IMR-90 (cell line): ENCODE measurements at regions of chr4 and their contacts with region 1.

Region 1: DNA sequence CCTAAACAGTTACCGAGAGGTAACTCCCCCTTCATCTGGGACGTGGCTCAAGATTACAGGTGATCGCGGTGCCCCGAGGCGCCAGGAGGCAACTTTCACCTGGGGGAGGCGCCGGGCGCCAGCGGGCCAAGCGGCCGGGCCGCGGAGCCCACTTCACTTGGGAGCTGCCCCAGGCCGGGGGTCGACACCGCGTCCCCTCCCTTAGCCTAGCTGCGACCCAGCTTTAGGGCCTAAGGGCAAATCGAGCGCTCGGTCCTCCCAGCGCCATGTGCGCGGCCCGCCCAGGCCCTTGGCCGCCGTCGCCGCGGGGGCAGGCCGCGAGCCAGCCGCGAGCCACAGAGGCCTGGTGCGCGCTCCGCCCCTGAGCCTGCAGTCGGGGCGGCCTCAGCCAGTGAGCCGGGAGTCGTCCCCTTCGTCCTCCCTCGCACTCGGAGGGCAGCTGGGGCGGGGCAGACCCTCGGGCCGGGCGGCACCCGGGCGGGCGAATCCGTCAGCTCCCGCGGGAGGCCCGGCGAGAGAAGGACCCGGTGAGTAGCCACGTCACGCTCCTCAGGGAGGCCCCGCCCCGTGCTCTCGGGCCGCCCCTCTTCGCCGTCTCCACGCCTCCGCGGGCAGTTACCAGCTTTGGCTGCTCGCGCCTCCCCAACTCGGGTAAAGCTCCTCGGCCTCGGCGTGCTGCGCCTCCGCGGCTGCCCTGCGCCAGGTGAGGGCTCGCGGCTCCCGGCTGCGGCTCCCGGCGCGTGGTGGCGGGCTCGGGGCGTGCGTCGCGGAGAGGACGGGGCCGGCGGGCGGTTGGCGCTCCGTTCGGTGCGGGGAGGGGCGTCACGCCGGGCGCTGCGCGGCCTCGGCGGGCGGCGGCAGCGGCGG is at the start of gene LARP1B:
- DNase-seq: peak; percentile 95
- ATAC-seq: peak; percentile 96
- H3K4me3 ChIP-seq: peak within 1 kb of the TSS; percentile 77
- H3K27ac ChIP-seq: peak within 1 kb of the TSS; percentile 85
- H3K4me1 ChIP-seq: no peaks in the 10 kb centered on the region
- H3K27me3 ChIP-seq: no peaks in the 10 kb centered on the region
- CTCF ChIP-seq: no peak
- POLR2A ChIP-seq: peak; percentile 90
- RAD21 ChIP-seq: no peak
- total RNA-seq, gene LARP1B: 11.1 and 21.9 TPM in 2 replicates

Region 2: GRCh38 chr4:127959794-127960193 is 101.1 kb before region 1 on chr4:
- CTCF ChIA-PET with region 1: no interaction called
- POLR2A ChIA-PET with region 1: interaction called, 14 read pairs
- dilution Hi-C with region 1: no loop called
- in situ Hi-C with region 1: no loop called
- intact Hi-C with region 1: loop called (anchors 2 kb)
- DNase-seq: peak; percentile 6
- ATAC-seq: peak; percentile 28; the same call in 1 of the 2 replicates
- H3K4me3 ChIP-seq: no peak overlapping the region
- H3K27ac ChIP-seq: peak overlapping the region; percentile 24; the same call in 1 of the 2 replicates
- H3K4me1 ChIP-seq: no peaks in the 10 kb centered on the region
- H3K27me3 ChIP-seq: no peaks in the 10 kb centered on the region
- CTCF ChIP-seq: no peak
- POLR2A ChIP-seq: no peak
- RAD21 ChIP-seq: no peak

Region 3: DNA sequence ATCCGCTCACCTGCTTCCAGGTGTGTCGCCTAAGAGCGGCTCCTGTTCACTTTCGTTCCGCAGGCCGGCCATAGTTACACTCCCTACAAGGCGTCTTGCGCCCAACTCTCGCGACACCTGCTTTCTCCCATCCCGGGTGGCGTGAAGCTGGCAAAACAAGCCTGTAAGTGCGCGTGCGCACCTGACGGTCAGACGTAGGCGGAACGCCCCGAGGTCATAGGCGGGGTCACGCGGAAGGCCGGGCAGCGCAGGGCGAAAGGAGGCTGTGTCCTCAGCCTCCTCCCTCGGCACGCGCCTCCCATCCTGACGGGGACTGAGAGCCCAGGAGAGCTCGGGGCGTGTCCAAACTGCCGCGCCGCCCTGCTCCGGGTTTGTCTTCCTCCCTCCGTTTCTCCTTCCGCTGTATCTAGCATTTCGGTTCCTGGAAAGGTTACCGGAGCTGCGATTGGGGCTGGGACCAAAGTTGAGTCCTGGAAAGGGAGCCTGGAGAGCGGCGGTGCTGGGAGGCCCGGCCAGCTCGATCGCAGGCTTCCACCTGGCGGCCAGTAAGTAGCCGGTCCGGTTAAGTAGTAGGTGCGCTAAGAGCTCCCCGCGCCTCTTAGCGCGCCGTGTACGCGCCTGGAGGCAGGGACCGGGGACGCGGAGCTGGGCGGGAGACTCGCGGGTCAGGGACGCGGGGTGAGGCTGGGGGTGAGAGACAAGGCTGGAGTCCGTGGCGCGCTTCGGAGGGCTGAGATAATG is 95.7 kb before region 1 on chr4 and contains the starts of genes ABHD18 and MFSD8:
- CTCF ChIA-PET with region 1: interaction called, 3 read pairs
- POLR2A ChIA-PET with region 1: no interaction called
- dilution Hi-C with region 1: no loop called
- in situ Hi-C with region 1: no loop called
- intact Hi-C with region 1: loop called (anchors 2 kb)
- DNase-seq: peak; percentile 99
- ATAC-seq: peak; percentile 97
- H3K4me3 ChIP-seq: peak within 1 kb of the TSS; percentile 69
- H3K27ac ChIP-seq: peak within 1 kb of the TSS; percentile 63
- H3K4me1 ChIP-seq: no peaks in the 10 kb centered on the region
- H3K27me3 ChIP-seq: no peaks in the 10 kb centered on the region
- CTCF ChIP-seq: peak; percentile 45
- POLR2A ChIP-seq: peak; percentile 71
- RAD21 ChIP-seq: peak; percentile 42
- total RNA-seq, gene ABHD18: 4.3 and 4.7 TPM in 2 replicates
- total RNA-seq, gene MFSD8: 31.4 and 36.7 TPM in 2 replicates

Region 4: DNA sequence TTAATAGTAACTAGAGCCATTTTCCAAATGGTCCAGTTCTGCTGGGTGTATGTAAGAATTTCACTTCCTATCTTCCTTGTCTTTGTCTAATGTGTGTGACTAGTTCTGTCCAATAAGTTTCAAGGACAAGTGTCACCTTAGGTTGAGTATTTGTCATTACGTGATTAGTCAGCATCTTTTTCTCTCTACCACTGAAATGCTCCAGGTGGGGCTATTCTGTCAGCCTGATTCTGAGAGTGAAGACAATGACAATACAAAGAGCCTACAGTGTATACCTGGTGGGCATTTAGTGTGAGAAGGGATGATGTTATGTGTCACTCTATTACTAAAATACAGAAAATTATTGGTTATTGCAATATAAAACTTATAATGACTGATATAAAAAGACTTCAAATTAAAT is 1911.3 kb after region 1 on chr4:
- CTCF ChIA-PET with region 1: no interaction called
- POLR2A ChIA-PET with region 1: no interaction called
- dilution Hi-C with region 1: no loop called
- in situ Hi-C with region 1: no loop called
- intact Hi-C with region 1: no loop called
- DNase-seq: no peak
- ATAC-seq: no peak
- H3K4me3 ChIP-seq: no peak overlapping the region
- H3K27ac ChIP-seq: no peak overlapping the region
- H3K4me1 ChIP-seq: no peaks in the 10 kb centered on the region
- H3K27me3 ChIP-seq: no peaks in the 10 kb centered on the region
- CTCF ChIP-seq: no peak
- POLR2A ChIP-seq: no peak
- RAD21 ChIP-seq: no peak